ENCODE measurements at regions of chr1 and their contacts with region 1.

Region 1: DNA sequence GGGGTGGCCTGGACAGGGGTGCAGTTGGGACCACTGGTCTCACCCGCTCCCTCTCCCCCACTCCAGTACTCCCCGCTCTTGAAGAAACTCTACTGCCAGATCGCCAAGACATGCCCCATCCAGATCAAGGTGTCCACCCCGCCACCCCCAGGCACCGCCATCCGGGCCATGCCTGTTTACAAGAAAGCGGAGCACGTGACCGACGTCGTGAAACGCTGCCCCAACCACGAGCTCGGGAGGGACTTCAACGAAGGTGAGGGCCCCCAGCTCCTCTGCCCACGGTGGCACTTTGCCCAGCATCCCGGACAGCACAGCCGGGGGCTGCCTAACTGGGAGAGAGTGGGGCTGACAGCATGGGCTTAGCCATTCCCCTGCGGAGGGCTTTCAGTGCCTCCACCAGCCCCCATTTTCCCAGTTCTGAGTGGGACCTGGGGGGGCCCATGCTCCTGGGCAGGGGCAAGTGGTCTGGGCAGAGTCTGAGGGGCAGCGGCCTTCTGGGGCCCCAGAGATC is 30.2 kb upstream of the CCDC27 start:
- DNase-seq: no peak
- ATAC-seq: no peak
- H3K4me3 ChIP-seq: no peak overlapping the region
- H3K4me3 Mint-ChIP-seq: no peak overlapping the region
- H3K27ac ChIP-seq: no peak overlapping the region
- H3K27ac Mint-ChIP-seq: no peak overlapping the region
- H3K4me1 ChIP-seq: peaks cover 0 to 28% of the 10 kb centered on the region in 2 experiments
- H3K4me1 Mint-ChIP-seq: peaks cover 1 to 14% (median 7%) of the 10 kb centered on the region in 3 donors
- H3K27me3 ChIP-seq: peaks cover 0 to 29% of the 10 kb centered on the region in 2 experiments
- H3K27me3 Mint-ChIP-seq: peaks cover 0 to 5% of the 10 kb centered on the region in 2 donors

Region 2: GRCh38 chr1:3753656-3754454 is 31.8 kb after region 1 on chr1:
- CTCF ChIA-PET with region 1: interaction called in 1 of 2 experiments, 12 read pairs
- POLR2A ChIA-PET with region 1: no interaction called
- DNase-seq: no peak
- ATAC-seq: no peak
- H3K4me3 ChIP-seq: no peak overlapping the region
- H3K4me3 Mint-ChIP-seq: no peak overlapping the region
- H3K27ac ChIP-seq: no peak overlapping the region
- H3K27ac Mint-ChIP-seq: no peak overlapping the region
- H3K4me1 ChIP-seq: no peaks in the 10 kb centered on the region
- H3K4me1 Mint-ChIP-seq: no peaks in the 10 kb centered on the region
- H3K27me3 ChIP-seq: peaks cover 0 to 49% of the 10 kb centered on the region in 2 experiments
- H3K27me3 Mint-ChIP-seq: peaks cover 0 to 14% of the 10 kb centered on the region in 2 donors

Region 3: GRCh38 chr1:3796215-3797061 is 74.4 kb after region 1 on chr1 and contains the start of gene LRRC47:
- CTCF ChIA-PET with region 1: no interaction called
- POLR2A ChIA-PET with region 1: no interaction called
- DNase-seq: peak; percentile 87 to 98 (median 94)
- ATAC-seq: peak; percentile 100
- H3K4me3 ChIP-seq: peak within 1 kb of the TSS; percentile 63 to 86
- H3K4me3 Mint-ChIP-seq: peak within 1 kb of the TSS; percentile 84 to 93 (median 92)
- H3K27ac ChIP-seq: peak within 1 kb of the TSS; percentile 73
- H3K27ac Mint-ChIP-seq: peak within 1 kb of the TSS; percentile 94
- H3K4me1 ChIP-seq: peaks cover 16 to 39% of the 10 kb centered on the region in 2 experiments
- H3K4me1 Mint-ChIP-seq: peaks cover 39 to 50% (median 45%) of the 10 kb centered on the region in 3 donors
- H3K27me3 ChIP-seq: peaks cover 0 to 12% of the 10 kb centered on the region in 2 experiments
- H3K27me3 Mint-ChIP-seq: peaks cover 14 to 16% of the 10 kb centered on the region in 2 donors
- total RNA-seq, gene LRRC47: 37.3 to 49.1 (median 44.5) TPM